ENCODE measurements at regions of chr19 and their contacts with region 1.

Region 1: GRCh38 chr19:14136509-14137281 is at the start of gene ASF1B:
- DNase-seq: peak; percentile 99
- total RNA-seq, gene ASF1B: 0.70 TPM

Region 2: GRCh38 chr19:13978347-13978733 is 158.4 kb before region 1 on chr19:
- intact Hi-C with region 1: no loop called
- DNase-seq: peak; percentile 89

Region 3: GRCh38 chr19:14048443-14049153 is 88.1 kb before region 1 on chr19:
- intact Hi-C with region 1: no loop called
- DNase-seq: peak; percentile 81

Region 4: DNA sequence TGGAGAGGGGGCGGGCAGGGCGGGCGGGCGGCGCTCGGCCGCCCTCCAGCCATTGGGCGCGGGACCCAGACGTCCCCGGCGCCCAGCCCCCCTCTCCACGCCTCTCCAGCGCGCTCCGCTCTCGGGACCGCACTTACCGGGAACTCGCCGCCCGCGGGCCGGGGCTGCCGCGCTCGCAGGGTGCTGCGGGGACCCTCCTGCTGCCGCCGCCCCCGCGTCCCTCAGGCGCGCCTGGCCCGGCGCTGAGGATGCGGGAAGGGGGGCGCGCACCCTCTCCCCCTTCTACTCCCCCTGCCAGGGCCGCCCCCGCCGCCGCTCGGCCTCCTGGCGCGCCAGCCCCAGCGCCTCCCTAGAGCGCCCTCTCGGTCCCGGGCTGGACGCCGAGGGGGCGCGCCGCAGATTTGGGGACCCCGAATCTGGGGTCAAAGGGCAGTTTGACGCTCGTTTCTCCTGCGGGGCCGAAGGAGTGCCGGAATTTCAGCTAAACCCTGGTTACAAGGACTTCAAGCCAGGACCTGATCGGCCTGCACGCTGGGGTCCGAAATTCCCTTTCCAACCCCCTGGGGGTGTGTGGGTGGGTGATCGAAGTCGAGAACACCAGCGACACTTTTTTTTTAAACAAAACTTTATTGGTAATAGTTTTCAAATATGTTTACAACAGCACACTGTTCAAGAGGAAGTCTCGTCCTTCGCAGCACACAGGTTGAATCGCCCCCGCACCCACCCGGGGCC is 45.4 kb before region 1 on chr19:
- intact Hi-C with region 1: loop called (anchors 5 kb)
- DNase-seq: no peak

Region 5: DNA sequence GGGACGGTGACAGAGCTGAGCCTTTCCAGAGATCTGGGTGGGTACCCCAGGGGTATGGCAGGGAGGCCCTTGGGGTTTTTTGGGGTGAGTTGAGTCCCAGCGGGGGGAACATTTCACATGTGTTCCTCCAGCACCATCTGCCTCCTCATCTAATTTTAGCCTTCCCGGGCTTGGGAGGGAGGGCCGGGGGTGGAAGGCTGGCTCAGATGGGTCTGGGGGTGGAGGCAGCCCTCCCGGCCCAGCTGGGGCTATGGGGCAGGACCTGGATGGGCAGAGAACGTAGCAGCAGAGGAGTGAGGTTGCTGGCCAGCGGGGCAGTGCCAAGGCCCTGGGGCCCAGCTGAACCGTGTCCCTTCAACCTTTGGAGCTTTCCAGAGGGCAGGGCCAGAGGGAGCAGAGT is 45.8 kb after region 1 on chr19:
- intact Hi-C with region 1: no loop called
- DNase-seq: no peak

Measured in cardiac septum (tissue), 1 donor.